ENCODE measurements at regions of chr16 and their contacts with region 1.

Region 1: GRCh38 chr16:28974437-28975157 is at the start of gene SPNS1:
- DNase-seq: peak; percentile 82 to 95 (median 90)
- ATAC-seq: peak; percentile 95
- H3K4me3 Mint-ChIP-seq: peak within 1 kb of the TSS; percentile 97 to 99 (median 98)
- H3K27ac Mint-ChIP-seq: peak within 1 kb of the TSS; percentile 93 to 99 (median 98)
- H3K4me1 Mint-ChIP-seq: peaks cover 21 to 44% (median 42%) of the 10 kb centered on the region in 4 donors
- H3K27me3 Mint-ChIP-seq: peaks cover 0 to 2% (median 0%) of the 10 kb centered on the region in 5 donors
- polyA plus RNA-seq, gene SPNS1: 12.7 to 29.7 (median 24.9) TPM

Region 2: GRCh38 chr16:28898266-28898665 is 76.3 kb before region 1 on chr16:
- POLR2A ChIA-PET with region 1: no interaction called
- DNase-seq: no peak
- ATAC-seq: no peak
- H3K4me3 Mint-ChIP-seq: no peak overlapping the region
- H3K27ac Mint-ChIP-seq: no peak overlapping the region
- H3K4me1 Mint-ChIP-seq: peaks cover 3 to 11% (median 4%) of the 10 kb centered on the region in 4 donors
- H3K27me3 Mint-ChIP-seq: peaks cover 0 to 2% (median 0%) of the 10 kb centered on the region in 5 donors

Region 3: GRCh38 chr16:28910086-28911031 is 64.2 kb before region 1 on chr16:
- POLR2A ChIA-PET with region 1: no interaction called
- DNase-seq: no peak
- ATAC-seq: no peak
- H3K4me3 Mint-ChIP-seq: no peak overlapping the region
- H3K27ac Mint-ChIP-seq: no peak overlapping the region
- H3K4me1 Mint-ChIP-seq: no peaks in the 10 kb centered on the region
- H3K27me3 Mint-ChIP-seq: no peaks in the 10 kb centered on the region

Region 4: GRCh38 chr16:28950648-28951409 is 23.8 kb before region 1 on chr16 and contains the start of gene NFATC2IP:
- POLR2A ChIA-PET with region 1: interaction called, 20 read pairs
- DNase-seq: peak; percentile 97 to 100 (median 99)
- ATAC-seq: peak; percentile 95 to 96
- H3K4me3 Mint-ChIP-seq: peak within 1 kb of the TSS; percentile 87 to 100 (median 96)
- H3K27ac Mint-ChIP-seq: peak within 1 kb of the TSS; percentile 90 to 99 (median 94)
- H3K4me1 Mint-ChIP-seq: peaks cover 15 to 36% (median 31%) of the 10 kb centered on the region in 4 donors
- H3K27me3 Mint-ChIP-seq: no peaks in the 10 kb centered on the region
- polyA plus RNA-seq, gene NFATC2IP: 22.8 to 30.2 (median 28.7) TPM

Region 5: DNA sequence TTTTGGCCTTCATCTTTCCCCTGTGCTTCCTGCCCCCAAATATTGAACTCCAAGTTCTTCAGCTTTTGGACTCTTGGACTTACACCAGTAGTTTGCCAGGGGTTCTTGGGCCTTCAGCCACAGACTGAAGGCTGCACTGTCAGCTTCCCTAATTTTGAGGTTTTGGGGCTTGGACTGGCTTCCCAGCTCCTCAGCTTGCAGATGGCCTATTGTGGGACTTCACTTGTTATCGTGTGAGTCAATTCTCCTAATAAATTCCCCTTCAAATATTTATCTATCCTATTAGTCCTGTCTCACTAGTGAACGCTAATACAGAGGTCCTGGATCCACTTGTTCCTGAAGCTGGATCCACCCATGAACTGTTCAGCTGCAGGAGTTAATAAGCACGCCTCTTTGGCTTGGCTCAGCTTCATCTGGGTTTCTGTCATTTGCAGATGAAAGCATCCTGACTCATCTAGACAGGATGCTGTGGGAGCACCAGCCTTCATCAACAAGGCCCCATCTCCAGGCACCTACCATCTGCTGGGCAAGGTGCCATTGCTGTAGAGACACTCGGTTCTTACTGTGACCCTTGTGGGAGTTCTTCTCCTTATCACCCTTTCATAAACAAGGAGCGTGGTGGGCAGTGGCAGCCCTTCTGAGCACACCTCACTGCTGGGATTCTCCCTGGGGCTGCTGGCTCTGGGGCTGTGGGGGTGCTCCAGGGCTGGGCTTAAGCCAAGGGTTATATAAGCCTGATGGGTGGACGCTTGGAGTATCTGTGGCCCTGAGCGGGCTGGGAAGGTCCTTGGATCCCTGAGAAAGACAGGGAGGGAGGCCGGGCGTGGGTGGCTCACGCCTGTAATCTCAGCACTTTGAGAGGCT is 33.4 kb after region 1 on chr16:
- POLR2A ChIA-PET with region 1: interaction called, 494 read pairs
- DNase-seq: peak in 8 of 10 donors; percentile 43 to 88 (median 64)
- ATAC-seq: peak; percentile 76 to 80
- H3K4me3 Mint-ChIP-seq: peak overlapping the region; percentile 57 to 89 (median 72)
- H3K27ac Mint-ChIP-seq: peak overlapping the region; percentile 90 to 100 (median 95)
- H3K4me1 Mint-ChIP-seq: peaks cover 29 to 65% (median 62%) of the 10 kb centered on the region in 4 donors
- H3K27me3 Mint-ChIP-seq: no peaks in the 10 kb centered on the region

Region 6: GRCh38 chr16:29023279-29024277 is 49.0 kb after region 1 on chr16:
- POLR2A ChIA-PET with region 1: interaction called, 13 read pairs
- DNase-seq: peak in 5 of 10 donors; percentile 18 to 61 (median 50)
- ATAC-seq: peak; percentile 52 to 68
- H3K4me3 Mint-ChIP-seq: peak overlapping the region; percentile 31 to 86 (median 70)
- H3K27ac Mint-ChIP-seq: peak overlapping the region; percentile 90 to 98 (median 94)
- H3K4me1 Mint-ChIP-seq: peaks cover 26 to 70% (median 56%) of the 10 kb centered on the region in 4 donors
- H3K27me3 Mint-ChIP-seq: no peaks in the 10 kb centered on the region